ENCODE measurements at regions of chr19 and their contacts with region 1.

Region 1: GRCh38 chr19:4400135-4400936 is at the start of gene SH3GL1:
- DNase-seq: peak; percentile 87
- H3K4me3 Mint-ChIP-seq: peak within 1 kb of the TSS; percentile 90
- H3K27ac Mint-ChIP-seq: peak within 1 kb of the TSS; percentile 90
- H3K4me1 Mint-ChIP-seq: peaks cover 49% of the 10 kb centered on the region
- H3K27me3 Mint-ChIP-seq: no peaks in the 10 kb centered on the region
- total RNA-seq, gene SH3GL1: 49.2 and 56.3 TPM in 2 replicates

Region 2: DNA sequence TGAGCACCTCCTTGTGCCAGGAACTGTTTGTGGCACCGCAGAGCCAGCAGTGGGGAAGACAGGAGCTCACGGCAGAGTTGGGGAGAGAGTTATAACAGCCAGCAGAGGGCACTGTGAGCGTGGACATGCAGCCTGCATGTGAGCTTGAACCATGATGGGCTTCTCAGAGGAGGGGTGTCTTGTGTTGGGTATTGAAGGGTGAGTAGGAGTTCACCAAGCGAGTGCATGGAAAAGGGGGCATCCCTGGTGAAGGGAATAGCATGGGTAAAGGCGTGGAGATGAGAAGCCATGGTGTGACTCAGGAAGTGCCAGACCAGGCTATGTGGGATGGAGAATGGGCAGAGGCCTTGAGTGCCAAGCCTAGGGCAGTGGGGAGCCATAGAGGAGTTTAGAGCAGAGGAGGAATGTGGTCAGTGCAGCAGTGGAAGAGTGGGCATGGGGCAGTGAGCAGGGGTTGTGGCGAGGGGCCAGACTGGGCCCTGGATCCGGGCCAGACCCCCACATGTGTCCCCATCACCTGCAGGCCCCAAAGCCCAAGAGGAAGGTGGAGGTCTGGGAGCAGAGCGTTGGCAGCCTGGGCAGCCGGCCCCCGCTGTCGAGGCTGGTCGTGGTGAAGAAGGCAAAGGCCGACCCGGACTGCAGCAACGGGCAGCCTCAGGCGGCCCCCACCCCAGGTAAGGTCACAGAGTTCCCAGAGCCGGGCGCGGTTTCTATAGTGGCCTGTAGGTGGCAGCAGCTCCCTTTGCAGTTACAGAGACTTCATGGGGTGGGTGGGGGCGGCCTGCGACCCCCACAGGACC is 133.0 kb before region 1 on chr19:
- intact Hi-C with region 1: loop called (anchors 5 kb)
- DNase-seq: peak; percentile 49
- H3K4me3 Mint-ChIP-seq: no peak overlapping the region
- H3K27ac Mint-ChIP-seq: peak overlapping the region; percentile 10
- H3K4me1 Mint-ChIP-seq: peaks cover 3% of the 10 kb centered on the region
- H3K27me3 Mint-ChIP-seq: no peaks in the 10 kb centered on the region

Region 3: DNA sequence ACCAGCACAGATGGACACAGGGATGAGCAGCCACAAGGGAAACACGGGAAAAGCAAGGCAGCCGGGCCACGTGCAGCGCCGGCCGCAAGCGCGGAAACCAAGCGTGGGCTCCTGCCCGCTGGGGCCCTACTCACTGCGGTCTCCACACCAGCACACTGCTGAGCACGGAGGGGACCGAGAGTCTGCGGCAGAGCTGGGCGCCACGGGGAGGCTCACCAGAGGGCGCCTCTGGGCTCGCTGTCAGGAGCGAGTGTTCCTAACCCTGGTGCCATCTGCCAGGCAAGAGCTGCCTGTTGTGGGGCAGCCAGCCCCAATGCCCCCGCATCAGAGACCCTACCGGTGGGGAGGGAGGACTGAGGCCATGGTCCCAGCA is 30.5 kb before region 1 on chr19:
- intact Hi-C with region 1: loop called (anchors 1 kb)
- DNase-seq: peak; percentile 69
- H3K4me3 Mint-ChIP-seq: peak overlapping the region; percentile 66
- H3K27ac Mint-ChIP-seq: peak overlapping the region; percentile 82
- H3K4me1 Mint-ChIP-seq: peaks cover 34% of the 10 kb centered on the region
- H3K27me3 Mint-ChIP-seq: no peaks in the 10 kb centered on the region

Region 4: GRCh38 chr19:4471403-4472173 is 71.3 kb after region 1 on chr19:
- intact Hi-C with region 1: loop called (anchors 2 kb)
- DNase-seq: peak; percentile 99
- H3K4me3 Mint-ChIP-seq: no peak overlapping the region
- H3K27ac Mint-ChIP-seq: no peak overlapping the region
- H3K4me1 Mint-ChIP-seq: peaks cover 18% of the 10 kb centered on the region
- H3K27me3 Mint-ChIP-seq: no peaks in the 10 kb centered on the region

Region 5: DNA sequence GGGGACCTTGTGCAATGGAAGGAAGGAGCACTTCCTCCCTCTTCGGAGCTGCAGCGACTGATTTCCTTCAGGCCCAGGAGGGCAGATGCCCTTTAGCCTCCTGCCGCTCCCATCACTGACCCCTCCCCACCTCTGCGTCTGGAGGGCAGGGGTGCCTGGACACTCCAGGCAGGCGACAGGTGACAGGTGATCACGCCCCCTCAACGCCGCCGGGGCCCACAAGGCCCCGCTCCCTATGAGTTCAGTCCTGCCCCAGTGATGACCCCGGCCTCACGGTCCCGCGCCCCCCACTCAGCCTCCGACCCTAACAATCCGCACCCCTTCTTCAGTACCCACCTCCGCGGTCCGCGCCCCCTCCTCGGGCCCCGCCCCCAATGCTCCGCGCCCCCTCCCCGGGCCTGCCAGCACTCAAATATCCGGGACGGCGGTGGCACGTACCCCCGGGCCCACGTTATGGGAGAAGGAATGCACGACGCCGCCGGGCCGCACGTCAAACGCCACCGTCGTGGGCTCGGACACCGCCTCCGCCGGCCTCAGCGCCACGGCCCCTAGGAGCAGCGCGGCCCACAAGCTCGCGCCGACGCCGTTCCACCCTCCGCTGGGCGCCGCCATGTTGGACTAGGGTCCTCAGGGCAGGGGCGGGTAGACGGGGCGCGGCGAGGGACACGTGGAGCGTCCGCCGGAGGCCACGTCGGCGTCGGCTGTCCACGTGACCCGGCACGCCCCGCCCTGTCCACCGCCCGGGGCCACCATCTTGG is 269.6 kb after region 1 on chr19 and contains the start of gene MYDGF:
- intact Hi-C with region 1: no loop called
- DNase-seq: peak; percentile 89
- H3K4me3 Mint-ChIP-seq: peak within 1 kb of the TSS; percentile 87
- H3K27ac Mint-ChIP-seq: peak within 1 kb of the TSS; percentile 72
- H3K4me1 Mint-ChIP-seq: peaks cover 11% of the 10 kb centered on the region
- H3K27me3 Mint-ChIP-seq: no peaks in the 10 kb centered on the region
- total RNA-seq, gene MYDGF: 105 and 110 TPM in 2 replicates

Measured in activated T-helper 2 cell treated with anti-CD3 and anti-CD28 coated beads, Interferon-gamma antibody, Interleukin-2, Interleukin-4, amounts not matched to agents 10 μg/mL and 5 μg/mL and 100 μg/mL, durations not matched to agents 14 hours and 24 hours and 36 hours (primary cell).